ENCODE measurements at regions of chr12 and their contacts with region 1.

Region 1: DNA sequence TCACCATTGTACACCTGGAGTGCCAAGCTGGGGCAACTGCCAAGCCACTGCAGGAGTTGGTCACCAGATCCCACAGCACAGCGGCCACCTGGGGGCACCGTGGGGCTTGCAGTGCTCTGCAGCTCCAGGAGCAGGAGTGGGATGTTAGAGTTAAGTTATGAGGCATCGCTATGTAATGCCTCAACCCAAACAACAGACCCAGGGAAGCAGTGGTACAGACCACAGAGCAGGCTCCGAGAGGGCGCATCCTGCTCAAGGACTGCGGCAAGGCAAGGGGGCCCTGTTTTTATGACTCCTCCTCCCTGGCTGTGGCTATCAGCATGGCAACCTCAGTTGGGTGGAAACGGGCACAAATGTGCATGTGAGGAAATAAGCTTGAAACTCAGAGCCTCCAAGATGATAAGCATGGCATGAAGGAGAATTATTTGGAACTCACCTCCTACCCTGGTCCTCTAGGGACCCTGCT is 63.1 kb downstream of the ARL6IP4 start:
- DNase-seq: peak; percentile 43 to 91 (median 82)
- ATAC-seq: peak; percentile 96
- H3K4me3 ChIP-seq: no peak overlapping the region
- H3K27ac ChIP-seq: peak overlapping the region in 1 of 2 donors; percentile 56
- H3K4me1 ChIP-seq: peaks cover 0 to 33% of the 10 kb centered on the region in 2 donors
- H3K27me3 ChIP-seq: no peaks in the 10 kb centered on the region
- CTCF ChIP-seq: peak; percentile 28 to 58

Region 2: DNA sequence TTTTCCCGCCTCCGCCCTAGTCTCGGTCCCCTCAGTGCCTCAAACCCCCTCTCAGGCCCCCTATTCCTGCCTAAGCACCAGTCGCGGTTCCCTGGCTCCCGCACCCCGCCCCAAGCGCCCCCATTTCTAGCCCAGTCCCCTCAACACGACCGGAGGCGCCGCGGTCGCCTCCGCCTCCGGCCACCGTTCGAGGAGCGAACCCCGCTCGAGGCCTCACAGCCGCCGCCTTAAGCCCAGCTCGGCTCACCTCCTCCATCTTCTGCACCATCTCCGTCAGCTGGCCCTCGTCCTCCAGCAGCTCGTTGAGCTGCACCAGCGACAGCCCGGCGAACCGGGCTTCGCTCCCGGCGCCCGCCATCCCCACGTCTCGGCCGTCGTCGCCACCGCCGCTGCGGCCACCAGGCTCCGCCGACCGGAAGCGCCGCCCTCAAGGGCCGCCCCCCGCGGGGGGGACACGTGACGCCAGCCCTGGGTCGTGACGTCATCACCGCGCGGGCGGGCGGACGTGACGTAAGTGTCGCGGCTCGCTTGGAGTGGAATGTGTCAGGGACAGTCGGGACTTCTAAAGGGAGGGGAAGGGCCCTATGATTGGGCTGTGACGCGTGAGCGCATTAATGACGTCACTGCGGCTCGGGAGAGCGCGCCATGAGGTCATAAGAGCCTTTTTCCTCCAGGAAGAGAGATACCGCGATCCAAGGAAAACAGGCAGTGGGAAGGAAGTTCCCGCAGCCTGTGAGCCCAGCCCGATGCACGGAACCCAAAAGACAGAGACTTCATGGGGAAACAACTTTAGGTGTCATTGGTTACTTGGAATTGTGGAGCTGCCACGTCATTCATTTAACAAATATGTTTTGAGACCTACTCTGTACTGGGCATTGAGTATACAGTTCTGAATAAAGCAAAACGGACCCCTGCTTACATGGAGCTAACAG is 147.6 kb before region 1 on chr12 and contains the start of gene VPS37B:
- intact Hi-C with region 1: no loop called
- DNase-seq: peak; percentile 80 to 94 (median 90)
- ATAC-seq: peak; percentile 69
- H3K4me3 ChIP-seq: peak within 1 kb of the TSS; percentile 65
- H3K27ac ChIP-seq: peak within 1 kb of the TSS; percentile 86 to 95
- H3K4me1 ChIP-seq: peaks cover 23 to 49% of the 10 kb centered on the region in 2 donors
- H3K27me3 ChIP-seq: no peaks in the 10 kb centered on the region
- CTCF ChIP-seq: no peak
- polyA plus RNA-seq, gene VPS37B: 23.2 to 32.9 (median 26.4) TPM

Region 3: DNA sequence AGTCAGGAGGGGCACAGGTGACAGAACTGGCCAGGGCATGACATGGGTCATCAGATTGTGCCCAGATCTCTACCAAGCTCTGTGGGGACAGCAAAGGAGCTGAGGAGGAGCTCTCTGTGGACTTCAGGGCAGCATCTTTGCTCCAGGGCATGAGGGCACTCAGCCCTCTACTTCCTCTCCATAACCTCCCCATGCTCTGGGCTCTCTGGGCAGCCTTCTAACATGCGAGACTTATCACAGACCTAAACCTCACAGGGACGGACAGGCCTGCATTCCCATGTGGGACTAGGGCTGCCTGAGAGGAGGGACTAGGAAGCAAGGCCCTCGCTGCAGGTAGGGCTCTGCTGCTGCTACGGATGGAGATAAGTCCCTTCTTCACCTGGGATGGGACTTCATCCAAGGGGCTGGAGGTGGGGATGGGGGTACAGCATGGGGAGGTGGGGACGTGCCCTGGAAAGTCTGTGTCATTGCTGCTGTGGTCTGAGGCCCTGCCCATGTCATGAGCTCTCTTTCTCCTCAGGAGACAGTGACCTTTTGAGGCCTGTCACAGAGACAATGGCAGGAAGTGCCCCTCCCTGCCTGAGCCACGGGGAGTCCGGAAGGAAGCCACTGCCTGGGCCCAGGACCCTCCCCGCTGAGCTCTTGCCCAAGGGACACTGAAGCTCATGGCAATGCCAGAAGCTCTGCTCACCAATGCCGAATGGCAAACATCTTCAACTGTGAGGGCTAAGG is 63.2 kb after region 1 on chr12:
- intact Hi-C with region 1: no loop called
- DNase-seq: peak in 1 of 4 donors; percentile 57
- ATAC-seq: peak; percentile 50
- H3K4me3 ChIP-seq: no peak overlapping the region
- H3K27ac ChIP-seq: peak overlapping the region; percentile 62 to 77
- H3K4me1 ChIP-seq: peaks cover 14 to 59% of the 10 kb centered on the region in 2 donors
- H3K27me3 ChIP-seq: no peaks in the 10 kb centered on the region
- CTCF ChIP-seq: no peak

Region 4: GRCh38 chr12:123150744-123151456 is 107.3 kb after region 1 on chr12 and contains the start of gene PITPNM2:
- intact Hi-C with region 1: loop called in 1 of 2 experiments (anchors 5 kb)
- DNase-seq: peak in 3 of 4 donors; percentile 38 to 90 (median 63)
- ATAC-seq: peak; percentile 80
- H3K4me3 ChIP-seq: peak within 1 kb of the TSS; percentile 57 to 58
- H3K27ac ChIP-seq: peak within 1 kb of the TSS; percentile 79 to 81
- H3K4me1 ChIP-seq: peaks cover 9 to 42% of the 10 kb centered on the region in 2 donors
- H3K27me3 ChIP-seq: peaks cover 0 to 23% of the 10 kb centered on the region in 2 donors
- CTCF ChIP-seq: no peak
- polyA plus RNA-seq, gene PITPNM2: 11.3 to 17.2 (median 13.3) TPM

Region 5: GRCh38 chr12:123232807-123233543 is 189.4 kb after region 1 on chr12 and contains the starts of genes MPHOSPH9 and MTRFR:
- intact Hi-C with region 1: loop called in 1 of 2 experiments (anchors 10 kb)
- DNase-seq: peak; percentile 98 to 100 (median 99)
- ATAC-seq: peak; percentile 97
- H3K4me3 ChIP-seq: peak within 1 kb of the TSS; percentile 73 to 95
- H3K27ac ChIP-seq: peak within 1 kb of the TSS; percentile 88
- H3K4me1 ChIP-seq: peaks cover 28 to 73% of the 10 kb centered on the region in 2 donors
- H3K27me3 ChIP-seq: no peaks in the 10 kb centered on the region
- CTCF ChIP-seq: no peak
- polyA plus RNA-seq, gene MPHOSPH9: 33.9 to 46.7 (median 37.7) TPM
- polyA plus RNA-seq, gene MTRFR: 24.4 to 28.5 (median 26.8) TPM

Region 6: DNA sequence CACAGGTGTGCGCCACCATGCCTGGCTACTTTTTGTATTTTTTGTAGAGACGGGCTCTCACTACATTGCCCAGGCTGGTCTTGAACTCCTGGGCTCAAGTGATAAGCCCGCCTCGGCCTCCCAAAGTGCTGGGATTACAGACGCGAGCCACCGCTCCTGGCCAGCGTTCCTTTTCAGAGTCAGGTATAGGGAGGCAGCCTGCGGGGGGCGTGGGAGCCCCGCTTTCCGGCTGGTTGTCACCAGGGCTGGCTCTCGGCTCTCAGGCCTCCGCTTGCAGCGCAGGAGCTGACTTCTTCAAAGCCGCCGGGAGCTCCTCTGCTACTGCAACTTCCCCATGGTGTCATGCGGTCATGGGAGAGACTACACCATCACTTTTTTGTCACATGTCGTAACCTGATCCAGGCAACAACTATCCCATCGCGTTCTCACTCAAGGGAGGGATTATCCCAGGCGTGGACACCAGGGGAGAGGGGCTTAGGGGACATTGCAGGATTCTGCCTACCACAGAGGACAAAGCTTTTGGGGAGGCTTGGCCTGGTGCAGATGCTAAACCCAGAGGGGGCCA is 1690.7 kb after region 1 on chr12:
- intact Hi-C with region 1: no loop called
- DNase-seq: peak in 2 of 4 donors; percentile 81 to 90
- ATAC-seq: peak; percentile 54
- H3K4me3 ChIP-seq: no peak overlapping the region
- H3K27ac ChIP-seq: peak overlapping the region; percentile 48 to 73
- H3K4me1 ChIP-seq: peaks cover 6 to 58% of the 10 kb centered on the region in 2 donors
- H3K27me3 ChIP-seq: no peaks in the 10 kb centered on the region
- CTCF ChIP-seq: no peak